Activated CD4-positive, alpha-beta T cell treated with anti-CD3 and anti-CD28 coated beads for 36 hours (primary cell): ENCODE measurements at regions of chr5 and their contacts with region 1.

Region 1: DNA sequence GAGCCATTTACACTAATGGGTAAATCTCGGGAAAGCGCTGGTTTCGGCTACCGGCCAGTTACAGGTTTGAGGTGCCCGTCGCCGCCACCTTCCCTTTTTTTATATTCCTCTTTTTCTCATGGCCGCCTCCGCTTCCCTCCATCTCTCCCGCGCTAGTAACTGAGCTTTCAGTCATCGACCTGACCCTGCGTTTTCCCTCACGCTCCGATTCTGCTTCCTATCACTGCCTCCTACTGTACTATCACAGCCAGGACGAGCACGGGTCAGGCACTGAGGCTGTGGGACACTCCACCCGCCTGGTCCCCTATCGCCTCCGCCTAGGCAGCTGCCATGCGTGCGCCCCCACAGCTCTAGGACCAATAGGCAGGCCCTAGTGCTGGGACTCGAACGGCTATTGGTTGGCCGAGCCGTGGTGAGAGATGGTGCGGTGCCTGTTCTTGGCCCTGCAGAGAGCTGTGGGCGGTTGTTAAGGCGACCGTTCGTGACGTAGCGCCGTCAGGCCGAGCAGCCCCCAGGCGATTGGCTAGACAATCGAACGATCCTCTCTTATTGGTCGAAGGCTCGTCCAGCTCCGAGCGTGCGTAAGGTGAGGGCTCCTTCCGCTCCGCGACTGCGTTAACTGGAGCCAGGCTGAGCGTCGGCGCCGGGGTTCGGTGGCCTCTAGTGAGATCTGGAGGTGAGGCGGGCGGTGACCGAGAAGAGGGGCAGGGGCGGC is at the start of gene HMGCR:
- DNase-seq: peak; percentile 99
- ATAC-seq: peak; percentile 96
- H3K4me3 Mint-ChIP-seq: no peak within 1 kb of the TSS
- H3K27ac Mint-ChIP-seq: no peak within 1 kb of the TSS
- H3K4me1 Mint-ChIP-seq: peaks cover 31% of the 10 kb centered on the region
- H3K27me3 Mint-ChIP-seq: no peaks in the 10 kb centered on the region
- total RNA-seq, gene HMGCR: 36.1 to 51.1 TPM

Region 2: GRCh38 chr5:74598731-74599130 is 738.1 kb before region 1 on chr5:
- CTCF ChIA-PET with region 1: no interaction called
- POLR2A ChIA-PET with region 1: no interaction called
- intact Hi-C with region 1: no loop called
- DNase-seq: no peak
- ATAC-seq: no peak
- H3K4me3 Mint-ChIP-seq: no peak overlapping the region
- H3K27ac Mint-ChIP-seq: no peak overlapping the region
- H3K4me1 Mint-ChIP-seq: no peaks in the 10 kb centered on the region
- H3K27me3 Mint-ChIP-seq: peaks cover 20% of the 10 kb centered on the region

Region 3: DNA sequence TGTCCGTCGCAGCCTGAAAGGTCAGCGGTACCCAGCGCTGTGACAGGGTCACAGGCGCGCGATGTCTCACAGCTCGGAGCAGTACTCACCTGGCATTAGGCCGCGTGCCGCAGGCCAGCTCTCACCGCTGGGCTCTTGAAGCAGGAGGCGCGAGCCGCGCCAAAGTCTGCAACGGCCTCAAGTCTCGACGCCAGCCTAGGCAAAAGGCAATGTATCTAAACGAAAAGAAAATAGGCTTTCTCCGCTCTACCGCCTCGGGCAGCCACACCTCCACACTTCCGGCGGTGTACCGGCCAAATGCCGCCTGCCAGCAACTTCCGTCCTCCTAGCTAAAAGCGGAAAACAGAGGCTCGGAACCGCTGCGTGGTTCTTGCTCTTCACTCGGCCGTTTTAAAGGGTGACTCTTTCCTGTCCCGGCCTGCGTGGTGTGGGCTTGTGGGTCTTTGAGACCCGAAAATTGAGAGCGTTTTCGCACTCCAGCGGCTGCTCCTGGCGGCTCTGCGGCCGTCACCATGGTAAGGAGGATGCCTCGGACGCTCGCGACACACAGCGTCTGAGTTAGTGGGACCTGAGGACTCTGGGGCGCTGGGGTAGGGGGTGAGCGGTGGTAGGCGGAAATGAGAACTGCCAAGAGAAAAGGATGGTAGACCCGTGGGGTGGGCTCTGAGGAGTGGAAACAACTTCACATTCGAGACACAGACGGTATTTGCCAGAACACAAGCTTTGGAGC is 569.8 kb before region 1 on chr5 and contains the starts of genes GFM2 and NSA2:
- CTCF ChIA-PET with region 1: no interaction called
- POLR2A ChIA-PET with region 1: no interaction called
- intact Hi-C with region 1: loop called in 1 of 2 experiments (anchors 2 kb)
- DNase-seq: peak; percentile 95
- ATAC-seq: peak; percentile 85
- H3K4me3 Mint-ChIP-seq: peak within 1 kb of the TSS; percentile 94
- H3K27ac Mint-ChIP-seq: peak within 1 kb of the TSS; percentile 99
- H3K4me1 Mint-ChIP-seq: peaks cover 34% of the 10 kb centered on the region
- H3K27me3 Mint-ChIP-seq: no peaks in the 10 kb centered on the region
- total RNA-seq, gene GFM2: 34.7 to 40.4 TPM
- total RNA-seq, gene NSA2: 163 to 253 TPM

Region 4: DNA sequence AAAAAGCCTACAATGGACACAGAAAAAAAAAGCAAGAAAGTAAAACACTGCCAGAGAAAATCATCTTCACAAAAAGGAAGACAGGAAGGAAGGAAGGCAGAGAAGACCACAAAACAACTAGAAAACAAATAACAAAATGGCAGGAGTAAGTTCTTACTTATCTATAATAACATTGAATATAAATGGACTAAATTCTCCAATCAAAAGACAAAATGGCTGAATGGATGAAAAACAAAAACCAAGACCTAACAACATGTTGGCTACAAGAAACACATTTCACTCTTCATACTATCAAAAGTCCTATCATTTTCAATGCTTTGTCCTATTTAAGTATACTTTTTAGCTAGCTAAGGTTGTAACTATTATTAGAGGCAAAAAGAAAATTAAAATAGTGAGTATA is 36.7 kb before region 1 on chr5:
- CTCF ChIA-PET with region 1: no interaction called
- POLR2A ChIA-PET with region 1: no interaction called
- intact Hi-C with region 1: no loop called
- DNase-seq: no peak
- ATAC-seq: no peak
- H3K4me3 Mint-ChIP-seq: no peak overlapping the region
- H3K27ac Mint-ChIP-seq: no peak overlapping the region
- H3K4me1 Mint-ChIP-seq: no peaks in the 10 kb centered on the region
- H3K27me3 Mint-ChIP-seq: peaks cover 4% of the 10 kb centered on the region

Region 5: DNA sequence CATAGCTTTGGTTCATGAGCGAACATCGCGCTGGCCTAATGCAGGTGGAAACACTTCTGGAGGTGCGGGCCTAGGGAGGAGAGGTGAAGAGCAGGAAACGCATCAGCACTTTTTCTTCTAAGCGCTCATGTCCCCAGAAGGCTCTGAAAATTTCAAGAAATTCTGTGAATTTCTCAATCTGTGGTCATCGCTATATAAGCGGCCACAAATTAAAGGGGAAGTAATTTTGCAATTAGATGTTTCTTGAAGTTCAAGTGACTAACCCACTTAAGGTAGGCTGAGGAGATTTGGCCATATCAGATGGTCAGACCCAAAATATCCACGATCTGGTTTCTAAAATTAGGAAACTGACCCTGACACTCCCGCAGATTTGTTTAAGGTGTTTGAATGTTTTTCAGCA is 16.4 kb before region 1 on chr5:
- CTCF ChIA-PET with region 1: interaction called, 6 read pairs
- POLR2A ChIA-PET with region 1: interaction called, 4 read pairs
- intact Hi-C with region 1: loop called (anchors 1 to 2 kb)
- DNase-seq: no peak
- ATAC-seq: no peak
- H3K4me3 Mint-ChIP-seq: no peak overlapping the region
- H3K27ac Mint-ChIP-seq: no peak overlapping the region
- H3K4me1 Mint-ChIP-seq: peaks cover 23% of the 10 kb centered on the region
- H3K27me3 Mint-ChIP-seq: no peaks in the 10 kb centered on the region

Region 6: DNA sequence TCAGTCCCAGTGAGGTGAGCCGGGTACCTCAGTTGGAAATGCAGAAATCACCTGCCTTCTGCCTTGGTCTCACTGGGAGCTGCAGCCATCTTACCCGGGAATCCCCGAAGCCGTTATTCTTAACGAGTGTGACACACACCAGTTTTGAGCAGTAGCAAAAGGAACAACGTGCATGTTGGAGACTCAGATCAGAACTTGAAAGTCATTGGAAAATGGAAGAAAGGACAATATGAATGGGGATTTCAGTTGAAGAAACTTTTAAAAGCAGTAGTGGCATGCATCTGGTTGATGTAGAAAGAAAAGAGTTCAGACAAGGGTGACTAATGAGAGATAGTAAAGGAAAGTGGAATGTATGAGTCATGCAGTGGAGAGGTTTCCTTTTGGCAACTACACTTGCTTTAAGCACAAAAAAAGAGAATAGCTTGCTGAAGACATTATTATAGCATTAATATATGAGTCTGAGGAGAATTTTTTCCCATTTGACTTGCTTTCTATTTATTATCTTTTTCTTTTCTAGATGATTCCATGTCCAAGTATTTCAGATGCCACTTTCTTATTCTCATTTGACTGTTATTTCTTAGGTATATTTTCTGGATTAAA is 230.0 kb after region 1 on chr5:
- CTCF ChIA-PET with region 1: interaction called, 3 read pairs
- POLR2A ChIA-PET with region 1: no interaction called
- intact Hi-C with region 1: loop called (anchors 2 to 5 kb)
- DNase-seq: peak; percentile 78
- ATAC-seq: peak; percentile 85
- H3K4me3 Mint-ChIP-seq: peak overlapping the region; percentile 56
- H3K27ac Mint-ChIP-seq: peak overlapping the region; percentile 96
- H3K4me1 Mint-ChIP-seq: peaks cover 63% of the 10 kb centered on the region
- H3K27me3 Mint-ChIP-seq: no peaks in the 10 kb centered on the region

Region 7: GRCh38 chr5:75681125-75681830 is 344.5 kb after region 1 on chr5:
- CTCF ChIA-PET with region 1: interaction called, 3 read pairs
- POLR2A ChIA-PET with region 1: no interaction called
- intact Hi-C with region 1: loop called in 1 of 2 experiments (anchors 5 kb)
- DNase-seq: no peak
- ATAC-seq: peak; percentile 45
- H3K4me3 Mint-ChIP-seq: no peak overlapping the region
- H3K27ac Mint-ChIP-seq: no peak overlapping the region
- H3K4me1 Mint-ChIP-seq: peaks cover 13% of the 10 kb centered on the region
- H3K27me3 Mint-ChIP-seq: no peaks in the 10 kb centered on the region